ENCODE measurements at regions of chr20 and their contacts with region 1.

Region 1: GRCh38 chr20:63739130-63740069 is at the start of gene SLC2A4RG:
- DNase-seq: peak in 1 of 2 experiments; percentile 79
- H3K4me3 ChIP-seq: peak within 1 kb of the TSS; percentile 49 to 83 (median 60)
- H3K27ac ChIP-seq: no peak within 1 kb of the TSS
- H3K4me1 ChIP-seq: peaks cover 0 to 20% (median 11%) of the 10 kb centered on the region in 4 experiments; a peak in 6 of 7 replicates
- H3K27me3 ChIP-seq: peaks cover 0 to 12% (median 8%) of the 10 kb centered on the region in 4 experiments; a peak in 4 of 7 replicates
- CTCF ChIP-seq: no peak
- EP300 ChIP-seq: no peak
- POLR2A ChIP-seq: no peak
- RAD21 ChIP-seq: no peak
- total RNA-seq, gene SLC2A4RG: 25.0 and 29.1 TPM in 2 replicates

Region 2: GRCh38 chr20:63707549-63708300 is 31.7 kb before region 1 on chr20 and contains the starts of genes ARFRP1 and ZGPAT:
- CTCF ChIA-PET with region 1: interaction called, 5 read pairs
- POLR2A ChIA-PET with region 1: interaction called, 16 read pairs
- DNase-seq: peak in 1 of 2 experiments; percentile 93
- H3K4me3 ChIP-seq: peak within 1 kb of the TSS; percentile 46 to 88 (median 74)
- H3K27ac ChIP-seq: no peak within 1 kb of the TSS
- H3K4me1 ChIP-seq: peaks cover 0 to 11% (median 6%) of the 10 kb centered on the region in 4 experiments; a peak in 5 of 7 replicates
- H3K27me3 ChIP-seq: no peaks in the 10 kb centered on the region
- CTCF ChIP-seq: no peak
- EP300 ChIP-seq: no peak
- POLR2A ChIP-seq: peak in 1 of 2 experiments; percentile 53; a peak in 1 of 3 replicates
- RAD21 ChIP-seq: 0 out of 4 replicates have a peak, but pooled peaks of 1 of the 2 experiments have one; percentile 0
- total RNA-seq, gene ARFRP1: 21.9 and 22.9 TPM in 2 replicates
- total RNA-seq, gene ZGPAT: 21.4 and 24.9 TPM in 2 replicates

Region 3: GRCh38 chr20:63750807-63751470 is 11.5 kb after region 1 on chr20:
- CTCF ChIA-PET with region 1: interaction called, 4 read pairs
- POLR2A ChIA-PET with region 1: interaction called, 23 read pairs
- DNase-seq: no peak
- H3K4me3 ChIP-seq: no peak overlapping the region
- H3K27ac ChIP-seq: no peak overlapping the region
- H3K4me1 ChIP-seq: peaks cover 0 to 20% (median 4%) of the 10 kb centered on the region in 4 experiments; a peak in 6 of 7 replicates
- H3K27me3 ChIP-seq: no peaks in the 10 kb centered on the region
- CTCF ChIP-seq: no peak
- EP300 ChIP-seq: no peak
- POLR2A ChIP-seq: no peak
- RAD21 ChIP-seq: no peak

Measured in H1 (cell line).